Left colon (tissue), 2 donors: ENCODE measurements at regions of chr9 and their contacts with region 1.

Region 1: GRCh38 chr9:37575921-37576721 is at the start of gene FBXO10:
- DNase-seq: peak; percentile 69 to 79
- ATAC-seq: peak; percentile 94
- total RNA-seq, gene FBXO10: 4.0 to 4.4 TPM

Region 2: GRCh38 chr9:37485389-37486219 is 90.5 kb before region 1 on chr9 and contains the start of gene POLR1E:
- intact Hi-C with region 1: loop called in 1 of 2 experiments (anchors 10 kb)
- DNase-seq: peak; percentile 96 to 97
- ATAC-seq: peak; percentile 99
- total RNA-seq, gene POLR1E: 8.5 to 11.4 TPM